Activated T-helper 2 cell treated with anti-CD3 and anti-CD28 coated beads, Interferon-gamma antibody, Interleukin-2, Interleukin-4, amounts not matched to agents 10 μg/mL and 5 μg/mL and 100 μg/mL, durations not matched to agents 14 hours and 24 hours and 36 hours (primary cell): ENCODE measurements at regions of chr17 and their contacts with region 1.

Region 1: GRCh38 chr17:44655983-44656710 is at the start of gene MEIOC:
- DNase-seq: peak; percentile 25
- H3K4me3 Mint-ChIP-seq: peak within 1 kb of the TSS; percentile 72
- H3K27ac Mint-ChIP-seq: no peak within 1 kb of the TSS
- H3K4me1 Mint-ChIP-seq: peaks cover 5% of the 10 kb centered on the region
- H3K27me3 Mint-ChIP-seq: peaks cover 26% of the 10 kb centered on the region
- total RNA-seq, gene MEIOC: 0.37 and 1.3 TPM in 2 replicates

Region 2: DNA sequence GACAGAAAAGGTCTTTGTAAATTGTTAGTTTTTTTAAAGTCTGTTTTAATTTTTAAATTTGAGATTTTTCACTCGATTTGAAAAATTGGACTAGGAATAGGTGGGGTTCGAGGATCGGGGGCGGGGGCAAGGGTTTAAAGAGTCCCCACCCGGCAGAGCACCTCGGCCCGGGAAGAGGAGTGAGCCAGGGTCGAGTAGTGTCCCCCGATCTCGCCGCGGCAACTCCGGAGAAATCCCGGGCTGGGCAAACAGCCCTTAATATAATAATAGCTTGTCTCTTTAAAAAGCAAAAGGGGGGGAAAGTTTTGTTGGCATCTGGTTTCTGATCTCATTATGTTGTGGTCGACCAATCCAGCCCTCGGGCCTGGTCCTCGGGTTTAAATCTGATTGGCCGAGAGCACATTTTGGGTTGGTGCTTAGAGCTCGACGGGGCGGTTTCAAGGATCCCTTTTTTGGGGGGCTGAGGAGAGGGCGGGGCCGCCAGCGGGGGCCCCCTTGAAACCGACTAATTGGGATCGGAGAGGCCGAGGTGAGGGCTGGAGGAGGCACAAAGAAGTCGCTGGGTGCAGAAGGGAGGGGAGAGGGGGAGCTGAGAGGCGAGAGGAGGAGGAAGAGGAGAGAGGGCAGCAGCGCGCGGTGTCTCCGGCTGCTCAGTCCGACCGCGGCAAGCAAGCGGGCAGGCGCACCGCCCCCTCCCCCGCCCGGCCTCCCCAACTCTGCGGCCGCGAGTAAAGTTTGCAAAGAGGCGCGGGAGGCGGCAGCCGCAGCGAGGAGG is 99.1 kb before region 1 on chr17 and contains the start of gene FZD2:
- intact Hi-C with region 1: loop called (anchors 5 kb)
- DNase-seq: peak; percentile 53
- H3K4me3 Mint-ChIP-seq: peak within 1 kb of the TSS; percentile 82
- H3K27ac Mint-ChIP-seq: peak within 1 kb of the TSS; percentile 34
- H3K4me1 Mint-ChIP-seq: peaks cover 12% of the 10 kb centered on the region
- H3K27me3 Mint-ChIP-seq: peaks cover 73% of the 10 kb centered on the region
- total RNA-seq, gene FZD2: 0.53 and 0.57 TPM in 2 replicates

Region 3: GRCh38 chr17:45235416-45236281 is 579.5 kb after region 1 on chr17:
- intact Hi-C with region 1: no loop called
- DNase-seq: peak; percentile 61
- H3K4me3 Mint-ChIP-seq: no peak overlapping the region
- H3K27ac Mint-ChIP-seq: peak overlapping the region; percentile 97
- H3K4me1 Mint-ChIP-seq: peaks cover 53% of the 10 kb centered on the region
- H3K27me3 Mint-ChIP-seq: no peaks in the 10 kb centered on the region